ENCODE measurements at regions of chr19 and their contacts with region 1.

Region 1: DNA sequence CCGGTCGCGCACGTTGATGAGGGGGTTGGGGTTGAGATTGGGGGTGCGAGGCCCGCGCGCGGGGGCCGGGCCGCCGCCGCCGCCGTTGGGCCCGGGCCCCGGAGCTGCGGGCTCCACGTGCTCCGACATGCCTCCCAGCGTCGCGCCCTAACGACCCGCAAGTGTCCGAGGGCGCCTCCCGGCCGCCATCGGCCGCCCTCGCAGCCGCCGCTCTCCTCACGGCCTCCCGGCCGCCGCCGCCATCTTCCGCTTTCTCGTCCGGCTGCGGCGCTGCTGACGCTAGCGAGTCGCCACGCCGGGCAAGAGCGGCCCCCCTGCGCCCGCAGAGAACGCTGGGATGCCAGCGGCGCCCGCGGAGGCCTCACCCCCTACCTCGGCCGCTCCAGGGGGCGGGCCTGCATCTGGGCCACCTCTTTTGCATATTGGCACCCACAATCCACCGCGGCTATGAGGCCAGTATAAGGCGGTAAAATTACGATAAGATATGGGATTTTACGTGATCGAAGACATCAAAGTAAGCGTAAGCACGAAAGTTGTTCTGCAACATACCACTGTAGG is at the start of gene TMEM259:
- DNase-seq: peak; percentile 94 to 98 (median 98)
- ATAC-seq: peak; percentile 86
- H3K4me3 ChIP-seq: peak within 1 kb of the TSS; percentile 89 to 94
- H3K4me3 Mint-ChIP-seq: peak within 1 kb of the TSS; percentile 90
- H3K27ac ChIP-seq: peak within 1 kb of the TSS; percentile 97 to 99
- H3K27ac Mint-ChIP-seq: peak within 1 kb of the TSS; percentile 100
- H3K4me1 ChIP-seq: peaks cover 43% of the 10 kb centered on the region
- H3K4me1 Mint-ChIP-seq: peaks cover 45% of the 10 kb centered on the region
- H3K27me3 ChIP-seq: no peaks in the 10 kb centered on the region
- H3K27me3 Mint-ChIP-seq: no peaks in the 10 kb centered on the region
- CTCF ChIP-seq: no peak
- total RNA-seq, gene TMEM259: 408 to 443 TPM

Region 2: DNA sequence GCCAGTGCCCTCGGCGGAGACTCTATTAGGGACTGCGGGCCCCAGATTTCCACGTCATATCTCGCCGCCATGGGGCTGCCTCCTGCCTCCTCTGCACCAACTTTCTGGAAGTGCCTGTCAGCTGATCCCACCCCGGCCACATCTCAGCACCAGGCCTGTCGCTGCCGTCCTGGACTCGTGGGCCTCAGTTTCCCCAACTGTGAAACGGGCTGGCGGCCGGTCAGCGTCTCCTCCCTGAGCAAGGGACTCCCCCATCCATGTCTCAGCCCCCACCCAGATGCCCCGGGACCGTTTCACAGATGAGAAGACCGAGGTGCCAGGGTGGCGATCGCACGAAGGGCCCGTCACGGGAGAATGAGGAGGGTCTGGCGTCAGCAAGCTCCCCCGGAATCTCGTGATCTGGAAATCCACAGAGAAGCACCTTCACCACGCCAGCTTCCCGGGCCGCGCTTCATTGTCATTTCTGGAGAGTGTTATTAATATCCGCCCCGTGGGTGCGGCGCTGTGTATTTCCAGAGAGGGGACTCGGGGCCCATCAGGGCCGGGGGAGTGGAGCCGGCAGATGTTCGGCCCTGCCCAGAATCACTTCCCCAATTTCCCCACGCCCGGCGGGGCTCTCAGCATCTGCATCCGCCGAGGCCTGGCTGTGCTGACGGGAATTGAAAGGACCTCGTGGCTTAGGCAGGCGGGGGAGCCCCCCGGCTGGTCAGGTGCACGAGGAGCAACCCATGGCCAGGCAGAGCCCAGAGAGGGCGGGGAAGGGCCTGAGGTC is 73.5 kb before region 1 on chr19:
- CTCF ChIA-PET with region 1: no interaction called
- POLR2A ChIA-PET with region 1: no interaction called
- intact Hi-C with region 1: no loop called
- DNase-seq: peak in 1 of 9 experiments; percentile 55
- ATAC-seq: no peak
- H3K4me3 ChIP-seq: no peak overlapping the region
- H3K4me3 Mint-ChIP-seq: no peak overlapping the region
- H3K27ac ChIP-seq: no peak overlapping the region
- H3K27ac Mint-ChIP-seq: no peak overlapping the region
- H3K4me1 ChIP-seq: peaks cover 1% of the 10 kb centered on the region
- H3K4me1 Mint-ChIP-seq: no peaks in the 10 kb centered on the region
- H3K27me3 ChIP-seq: no peaks in the 10 kb centered on the region
- H3K27me3 Mint-ChIP-seq: no peaks in the 10 kb centered on the region
- CTCF ChIP-seq: no peak

Region 3: GRCh38 chr19:996051-996838 is 24.7 kb before region 1 on chr19:
- CTCF ChIA-PET with region 1: interaction called, 4 read pairs
- POLR2A ChIA-PET with region 1: interaction called, 3 read pairs
- intact Hi-C with region 1: loop called in 1 of 2 experiments (anchors 1 kb)
- DNase-seq: peak; percentile 44 to 97 (median 84)
- ATAC-seq: peak; percentile 79
- H3K4me3 ChIP-seq: peak overlapping the region; percentile 29 to 36
- H3K4me3 Mint-ChIP-seq: peak overlapping the region; percentile 72
- H3K27ac ChIP-seq: peak overlapping the region; percentile 16 to 27
- H3K27ac Mint-ChIP-seq: peak overlapping the region; percentile 92
- H3K4me1 ChIP-seq: peaks cover 27% of the 10 kb centered on the region
- H3K4me1 Mint-ChIP-seq: peaks cover 13% of the 10 kb centered on the region
- H3K27me3 ChIP-seq: peaks cover 15 to 22% of the 10 kb centered on the region in 2 experiments
- H3K27me3 Mint-ChIP-seq: peaks cover 15% of the 10 kb centered on the region
- CTCF ChIP-seq: no peak

Region 4: GRCh38 chr19:1039646-1040475 is 18.9 kb after region 1 on chr19 and contains the start of gene ABCA7:
- CTCF ChIA-PET with region 1: interaction called, 68 read pairs
- POLR2A ChIA-PET with region 1: interaction called, 148 read pairs
- intact Hi-C with region 1: loop called (anchors 1 kb)
- DNase-seq: peak; percentile 98 to 100 (median 99)
- ATAC-seq: peak; percentile 90
- H3K4me3 ChIP-seq: peak within 1 kb of the TSS; percentile 71 to 96
- H3K4me3 Mint-ChIP-seq: peak within 1 kb of the TSS; percentile 99
- H3K27ac ChIP-seq: peak within 1 kb of the TSS; percentile 65 to 71
- H3K27ac Mint-ChIP-seq: peak within 1 kb of the TSS; percentile 96
- H3K4me1 ChIP-seq: peaks cover 43% of the 10 kb centered on the region
- H3K4me1 Mint-ChIP-seq: peaks cover 50% of the 10 kb centered on the region
- H3K27me3 ChIP-seq: no peaks in the 10 kb centered on the region
- H3K27me3 Mint-ChIP-seq: no peaks in the 10 kb centered on the region
- CTCF ChIP-seq: no peak
- total RNA-seq, gene ABCA7: 93.3 to 98.0 TPM

Region 5: GRCh38 chr19:1094975-1095701 is 74.2 kb after region 1 on chr19 and contains the start of gene POLR2E:
- CTCF ChIA-PET with region 1: interaction called, 5 read pairs
- POLR2A ChIA-PET with region 1: interaction called, 647 read pairs
- intact Hi-C with region 1: loop called (anchors 1 to 2 kb)
- DNase-seq: peak; percentile 97 to 99 (median 99)
- ATAC-seq: peak; percentile 93
- H3K4me3 ChIP-seq: peak within 1 kb of the TSS; percentile 79 to 86
- H3K4me3 Mint-ChIP-seq: peak within 1 kb of the TSS; percentile 94
- H3K27ac ChIP-seq: peak within 1 kb of the TSS; percentile 58 to 64
- H3K27ac Mint-ChIP-seq: peak within 1 kb of the TSS; percentile 90
- H3K4me1 ChIP-seq: peaks cover 51% of the 10 kb centered on the region
- H3K4me1 Mint-ChIP-seq: peaks cover 41% of the 10 kb centered on the region
- H3K27me3 ChIP-seq: no peaks in the 10 kb centered on the region
- H3K27me3 Mint-ChIP-seq: no peaks in the 10 kb centered on the region
- CTCF ChIP-seq: no peak
- total RNA-seq, gene POLR2E: 75.3 to 76.2 TPM

Region 6: GRCh38 chr19:1103708-1104310 is 82.9 kb after region 1 on chr19 and contains the start of gene GPX4:
- CTCF ChIA-PET with region 1: interaction called, 5 read pairs
- POLR2A ChIA-PET with region 1: interaction called, 4 read pairs
- intact Hi-C with region 1: loop called in 1 of 2 experiments (anchors 1 kb)
- DNase-seq: peak; percentile 96 to 100 (median 98)
- ATAC-seq: peak; percentile 88
- H3K4me3 ChIP-seq: peak within 1 kb of the TSS; percentile 73 to 93
- H3K4me3 Mint-ChIP-seq: peak within 1 kb of the TSS; percentile 76
- H3K27ac ChIP-seq: peak within 1 kb of the TSS; percentile 86
- H3K27ac Mint-ChIP-seq: peak within 1 kb of the TSS; percentile 92
- H3K4me1 ChIP-seq: peaks cover 46% of the 10 kb centered on the region
- H3K4me1 Mint-ChIP-seq: peaks cover 27% of the 10 kb centered on the region
- H3K27me3 ChIP-seq: no peaks in the 10 kb centered on the region
- H3K27me3 Mint-ChIP-seq: no peaks in the 10 kb centered on the region
- CTCF ChIP-seq: no peak
- total RNA-seq, gene GPX4: 172 to 174 TPM